SK-N-SH (cell line): ENCODE measurements at regions of chr3 and their contacts with region 1.

Region 1: DNA sequence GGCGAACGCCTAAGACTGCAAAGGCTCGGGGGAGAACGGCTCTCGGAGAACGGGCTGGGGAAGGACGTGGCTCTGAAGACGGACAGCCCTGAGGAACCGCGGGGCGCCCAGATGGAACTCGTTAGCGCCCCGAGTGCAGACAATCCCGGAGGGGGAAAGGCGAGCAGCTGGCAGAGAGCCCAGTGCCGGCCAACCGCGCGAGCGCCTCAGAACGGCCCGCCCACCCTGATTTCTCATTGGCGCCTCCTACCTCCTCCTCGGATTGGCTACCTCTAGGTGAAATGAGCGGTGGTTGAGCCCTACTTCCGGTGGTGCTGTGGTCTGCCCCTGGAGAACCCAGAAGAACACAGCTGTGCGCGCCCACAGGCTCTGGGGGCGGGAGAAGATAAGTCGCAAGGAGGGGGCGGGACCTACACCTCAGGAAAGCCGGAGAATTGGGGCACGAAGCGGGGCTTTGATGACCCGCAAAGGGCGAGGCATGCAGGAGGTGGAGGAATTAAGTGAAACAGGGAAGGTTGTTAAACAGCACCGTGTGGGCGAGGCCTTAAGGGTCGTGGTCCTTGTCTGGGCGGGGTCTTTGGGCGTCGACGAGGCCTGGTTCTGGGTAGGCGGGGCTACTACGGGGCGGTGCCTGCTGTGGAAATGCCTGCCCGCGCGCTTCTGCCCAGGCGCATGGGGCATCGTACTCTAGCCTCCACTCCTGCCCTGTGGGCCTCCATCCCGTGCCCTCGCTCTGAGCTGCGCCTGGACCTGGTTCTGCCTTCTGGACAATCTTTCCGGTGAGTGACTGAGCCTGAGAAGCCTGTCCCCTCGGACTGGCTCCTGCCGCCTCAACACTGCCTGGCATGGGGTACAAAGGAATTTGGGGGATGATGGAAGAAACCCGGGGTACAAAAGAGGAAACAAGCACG is at the start of gene OGG1:
- DNase-seq: peak; percentile 97
- H3K4me3 ChIP-seq: peak within 1 kb of the TSS; percentile 79 to 99
- H3K27ac ChIP-seq: peak within 1 kb of the TSS; percentile 93 to 99
- H3K4me1 ChIP-seq: peaks cover 17 to 24% of the 10 kb centered on the region in 2 experiments
- H3K27me3 ChIP-seq: no peaks in the 10 kb centered on the region
- CTCF ChIP-seq: no peak
- EP300 ChIP-seq: peak in 1 of 2 experiments; percentile 32; a peak in 2 of 4 replicates
- RAD21 ChIP-seq: no peak
- polyA plus RNA-seq, gene OGG1: 26.8 and 30.9 TPM in 2 replicates

Region 2: GRCh38 chr3:9731206-9732079 is 18.5 kb before region 1 on chr3 and contains the start of gene BRPF1:
- CTCF ChIA-PET with region 1: interaction called, 5 read pairs
- POLR2A ChIA-PET with region 1: interaction called, 22 read pairs
- DNase-seq: peak; percentile 99
- H3K4me3 ChIP-seq: peak within 1 kb of the TSS; percentile 84 to 91
- H3K27ac ChIP-seq: peak within 1 kb of the TSS; percentile 95 to 98
- H3K4me1 ChIP-seq: peaks cover 5 to 14% of the 10 kb centered on the region in 2 experiments; a peak in 1 of 4 replicates
- H3K27me3 ChIP-seq: no peaks in the 10 kb centered on the region
- CTCF ChIP-seq: no peak
- EP300 ChIP-seq: peak; percentile 83 to 87; a peak in 3 of 4 replicates
- RAD21 ChIP-seq: no peak
- polyA plus RNA-seq, gene BRPF1: 12.0 and 13.0 TPM in 2 replicates

Region 3: DNA sequence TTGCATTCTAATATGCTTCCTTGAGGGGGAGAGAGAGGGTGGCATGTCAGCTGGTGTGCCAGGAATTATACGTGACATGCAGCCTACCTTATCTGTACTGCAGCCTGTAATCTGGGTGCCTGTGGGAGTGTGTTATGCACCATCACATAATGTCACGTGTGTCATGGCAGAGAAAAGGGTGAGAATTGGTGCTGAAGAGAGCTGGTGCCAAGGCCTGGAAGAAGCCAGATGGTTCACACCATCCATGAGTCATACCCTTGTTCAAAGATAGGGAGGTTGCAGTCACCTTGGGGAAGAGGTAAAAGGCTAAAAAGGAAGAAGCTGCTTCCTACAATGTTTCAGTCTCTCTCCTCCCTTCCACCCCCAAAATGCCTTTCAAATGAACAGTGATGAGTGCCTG is 13.1 kb before region 1 on chr3:
- CTCF ChIA-PET with region 1: interaction called, 5 read pairs
- POLR2A ChIA-PET with region 1: interaction called, 22 read pairs
- DNase-seq: no peak
- H3K4me3 ChIP-seq: no peak overlapping the region
- H3K27ac ChIP-seq: no peak overlapping the region
- H3K4me1 ChIP-seq: peaks cover 0 to 12% of the 10 kb centered on the region in 2 experiments; a peak in 1 of 4 replicates
- H3K27me3 ChIP-seq: no peaks in the 10 kb centered on the region
- CTCF ChIP-seq: no peak
- EP300 ChIP-seq: no peak
- RAD21 ChIP-seq: no peak

Region 4: GRCh38 chr3:9769426-9770275 is 19.8 kb after region 1 on chr3 and contains the start of gene CAMK1:
- CTCF ChIA-PET with region 1: no interaction called
- POLR2A ChIA-PET with region 1: interaction called, 20 read pairs
- DNase-seq: peak; percentile 92
- H3K4me3 ChIP-seq: peak within 1 kb of the TSS; percentile 64 to 95
- H3K27ac ChIP-seq: no peak within 1 kb of the TSS; a peak in 1 of 4 replicates
- H3K4me1 ChIP-seq: peaks cover 6 to 14% of the 10 kb centered on the region in 2 experiments; a peak in 1 of 4 replicates
- H3K27me3 ChIP-seq: no peaks in the 10 kb centered on the region
- CTCF ChIP-seq: 0 out of 2 replicates have a peak, but pooled peaks have one; percentile 8
- EP300 ChIP-seq: no peak
- RAD21 ChIP-seq: no peak
- polyA plus RNA-seq, gene CAMK1: 44.9 and 47.1 TPM in 2 replicates